CD8-positive, alpha-beta memory T cell (primary cell): ENCODE measurements at regions of chr7 and their contacts with region 1.

Region 1: DNA sequence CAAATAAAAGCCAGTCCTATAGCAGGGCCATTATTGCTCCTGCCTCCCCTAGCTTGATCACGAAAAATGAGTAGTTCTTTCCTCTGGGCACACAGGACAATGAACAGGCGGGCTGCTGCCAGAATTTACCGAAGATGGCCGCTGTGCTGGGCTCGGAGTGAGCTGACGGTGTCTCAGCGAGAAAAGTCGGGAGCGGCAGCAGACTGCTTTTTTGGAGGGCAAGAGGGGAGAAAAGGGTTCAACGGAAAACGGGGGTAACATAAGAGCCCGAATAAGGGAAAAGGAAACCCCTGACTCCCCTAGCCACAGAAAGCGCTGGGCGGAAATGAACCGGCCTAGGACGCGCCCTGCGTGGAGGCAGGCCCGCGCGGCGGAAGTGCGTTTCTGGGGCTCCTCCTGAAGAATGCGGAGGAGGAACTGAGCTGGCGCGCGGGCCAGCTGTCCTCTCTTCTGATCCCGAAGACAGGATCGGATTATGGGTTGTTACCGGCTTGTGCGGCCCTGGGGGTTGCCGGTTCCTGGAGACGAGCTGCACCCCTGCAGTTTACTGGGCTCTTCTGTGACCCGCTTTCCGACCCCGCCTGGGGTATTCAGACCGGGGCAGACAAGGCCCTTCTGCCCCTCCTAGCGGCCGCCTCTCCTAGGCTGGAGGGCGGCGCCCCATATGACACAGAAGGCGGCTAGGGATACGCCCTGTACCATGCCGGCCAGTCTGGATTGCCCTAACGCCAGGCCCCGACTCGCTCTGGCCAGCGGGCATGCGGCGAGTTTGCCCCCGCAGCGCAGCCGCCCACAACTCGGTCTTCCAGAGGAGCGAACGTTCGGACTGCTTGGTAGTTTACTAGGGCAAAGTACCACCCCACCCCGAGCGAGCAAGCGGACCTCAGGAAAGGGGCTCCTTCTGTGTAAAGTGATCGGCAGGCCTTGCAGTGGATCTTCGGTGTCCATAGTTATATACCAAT is 30.1 kb upstream of the KMT2E start:
- DNase-seq: peak; percentile 75 to 90 (median 84)
- H3K4me3 ChIP-seq: peak overlapping the region; percentile 92
- H3K4me3 Mint-ChIP-seq: peak overlapping the region; percentile 92 to 100 (median 100)
- H3K27ac ChIP-seq: peak overlapping the region; percentile 98
- H3K27ac Mint-ChIP-seq: peak overlapping the region in 7 of 8 donors; percentile 98 to 100 (median 100)
- H3K4me1 ChIP-seq: peaks cover 25% of the 10 kb centered on the region
- H3K4me1 Mint-ChIP-seq: peaks cover 55 to 78% (median 60%) of the 10 kb centered on the region in 3 donors
- H3K27me3 ChIP-seq: no peaks in the 10 kb centered on the region
- H3K27me3 Mint-ChIP-seq: no peaks in the 10 kb centered on the region

Region 2: DNA sequence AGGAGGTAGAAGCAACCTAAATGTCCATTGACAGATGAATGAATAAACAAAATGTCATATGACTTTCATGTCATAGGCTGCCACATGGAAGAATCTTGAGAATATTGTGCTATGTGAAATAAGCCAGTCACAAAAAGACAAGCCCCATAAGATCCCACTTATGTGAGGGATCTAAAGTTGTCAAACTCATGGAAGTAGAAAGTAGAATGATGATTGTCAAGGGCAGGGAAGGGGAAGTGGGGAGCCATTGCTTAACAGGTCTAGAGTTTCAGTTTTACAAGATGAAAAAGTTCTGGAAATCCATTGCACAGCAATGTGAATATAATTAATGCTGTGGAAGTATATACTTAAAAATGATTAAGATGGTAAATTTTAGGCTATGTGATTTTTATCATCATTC is 199.2 kb before region 1 on chr7:
- CTCF ChIA-PET with region 1: no interaction called
- POLR2A ChIA-PET with region 1: no interaction called
- DNase-seq: no peak
- H3K4me3 ChIP-seq: no peak overlapping the region
- H3K4me3 Mint-ChIP-seq: no peak overlapping the region
- H3K27ac ChIP-seq: no peak overlapping the region
- H3K27ac Mint-ChIP-seq: no peak overlapping the region
- H3K4me1 ChIP-seq: no peaks in the 10 kb centered on the region
- H3K4me1 Mint-ChIP-seq: no peaks in the 10 kb centered on the region
- H3K27me3 ChIP-seq: no peaks in the 10 kb centered on the region
- H3K27me3 Mint-ChIP-seq: peaks cover 4 to 10% of the 10 kb centered on the region in 2 donors

Region 3: DNA sequence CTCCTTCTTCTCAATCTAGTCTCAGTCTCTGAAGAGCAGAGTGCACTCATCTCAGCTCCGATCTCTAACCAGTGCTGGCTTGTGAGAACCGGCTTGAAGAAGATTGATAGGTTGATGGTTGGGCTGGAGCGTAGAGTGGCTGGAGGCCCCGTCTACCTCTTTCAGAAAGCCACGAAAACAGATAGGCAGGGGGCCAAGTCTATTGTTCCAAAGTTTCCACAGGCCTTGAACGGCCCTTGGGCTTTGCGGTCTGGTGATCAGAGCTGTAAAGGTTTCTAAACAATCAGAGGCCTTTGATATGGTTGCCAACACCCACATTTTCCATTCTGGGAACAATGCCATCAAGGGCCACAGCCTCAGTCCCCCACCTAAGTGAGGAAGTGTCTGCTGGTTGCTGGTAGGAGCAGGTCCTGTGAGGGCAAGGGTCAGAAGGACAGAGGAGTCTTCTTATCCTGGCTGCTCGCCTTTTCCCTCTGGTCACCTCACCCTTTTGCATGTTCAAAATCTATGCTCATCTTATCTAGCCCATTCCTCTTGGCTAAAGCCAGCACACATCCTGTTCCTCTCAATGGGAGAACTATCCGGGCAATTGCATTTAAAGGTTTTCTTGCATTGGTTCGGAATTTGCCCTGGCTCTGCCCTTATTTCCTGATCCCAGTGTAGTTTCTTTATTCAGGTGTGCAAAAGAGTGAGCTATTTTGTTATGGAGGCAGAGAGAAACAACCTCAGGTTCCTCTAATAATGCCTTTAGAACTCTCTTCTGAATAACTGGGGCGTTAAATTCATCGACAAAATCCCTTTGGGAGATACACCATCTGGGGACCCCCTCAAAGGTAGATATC is 40.1 kb before region 1 on chr7:
- CTCF ChIA-PET with region 1: interaction called, 29 read pairs
- POLR2A ChIA-PET with region 1: interaction called, 6 read pairs
- DNase-seq: peak; percentile 47 to 89 (median 69)
- H3K4me3 ChIP-seq: peak overlapping the region; percentile 12
- H3K4me3 Mint-ChIP-seq: peak overlapping the region; percentile 73 to 95 (median 90)
- H3K27ac ChIP-seq: peak overlapping the region; percentile 99
- H3K27ac Mint-ChIP-seq: peak overlapping the region; percentile 99 to 100 (median 100)
- H3K4me1 ChIP-seq: peaks cover 55% of the 10 kb centered on the region
- H3K4me1 Mint-ChIP-seq: peaks cover 53 to 78% (median 66%) of the 10 kb centered on the region in 3 donors
- H3K27me3 ChIP-seq: no peaks in the 10 kb centered on the region
- H3K27me3 Mint-ChIP-seq: peaks cover 0 to 7% of the 10 kb centered on the region in 2 donors

Region 4: DNA sequence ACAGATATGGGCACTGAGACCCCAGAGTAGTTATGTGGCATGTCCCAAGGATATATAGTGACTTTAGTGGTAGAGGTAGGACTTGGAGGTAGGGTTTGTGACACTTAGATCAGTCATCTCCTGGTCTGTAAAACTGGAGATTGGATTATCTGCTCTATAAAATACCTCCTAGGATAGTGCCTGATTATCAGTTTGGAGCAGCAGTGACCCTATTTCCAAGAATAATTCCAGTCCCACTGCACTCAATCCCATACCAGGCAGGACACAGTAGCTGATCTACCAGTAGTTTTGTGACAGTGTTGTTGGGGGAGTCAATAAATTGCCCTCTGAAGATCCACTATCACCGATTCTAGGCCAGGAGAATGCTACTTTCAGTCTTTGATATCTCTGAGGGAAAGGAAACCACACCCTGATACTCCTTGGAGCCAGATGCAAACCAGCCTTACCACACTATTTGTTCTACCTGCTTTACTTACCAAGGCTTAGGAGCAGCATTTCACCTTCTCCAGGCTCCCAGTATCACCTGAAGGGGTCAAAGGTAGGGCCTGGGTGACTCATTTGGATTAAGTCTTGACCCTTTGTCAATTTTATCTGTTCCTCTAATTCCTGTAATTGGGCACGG is 60.7 kb after region 1 on chr7:
- CTCF ChIA-PET with region 1: interaction called, 46 read pairs
- POLR2A ChIA-PET with region 1: no interaction called
- DNase-seq: no peak
- H3K4me3 ChIP-seq: no peak overlapping the region
- H3K4me3 Mint-ChIP-seq: peak overlapping the region in 2 of 7 donors; percentile 8 to 10
- H3K27ac ChIP-seq: no peak overlapping the region
- H3K27ac Mint-ChIP-seq: peak overlapping the region in 6 of 8 donors; percentile 17 to 83 (median 54)
- H3K4me1 ChIP-seq: peaks cover 33% of the 10 kb centered on the region
- H3K4me1 Mint-ChIP-seq: peaks cover 48 to 75% (median 69%) of the 10 kb centered on the region in 3 donors
- H3K27me3 ChIP-seq: no peaks in the 10 kb centered on the region
- H3K27me3 Mint-ChIP-seq: no peaks in the 10 kb centered on the region